CD8-positive, alpha-beta T cell (primary cell): ENCODE measurements at regions of chr9 and their contacts with region 1.

Region 1: GRCh38 chr9:93095205-93096130 is 549 bp upstream of the CARD19 start:
- DNase-seq: peak; percentile 100
- ATAC-seq: peak; percentile 83
- H3K4me3 ChIP-seq: peak overlapping the region; percentile 70 to 89
- H3K4me3 Mint-ChIP-seq: peak overlapping the region; percentile 85
- H3K27ac ChIP-seq: peak overlapping the region; percentile 90 to 98
- H3K27ac Mint-ChIP-seq: peak overlapping the region; percentile 97
- H3K4me1 ChIP-seq: peaks cover 65% of the 10 kb centered on the region
- H3K4me1 Mint-ChIP-seq: peaks cover 71% of the 10 kb centered on the region
- H3K27me3 ChIP-seq: no peaks in the 10 kb centered on the region
- H3K27me3 Mint-ChIP-seq: no peaks in the 10 kb centered on the region
- CTCF ChIP-seq: no peak

Region 2: GRCh38 chr9:92963831-92964626 is 131.4 kb before region 1 on chr9:
- CTCF ChIA-PET with region 1: no interaction called
- POLR2A ChIA-PET with region 1: interaction called, 9 read pairs
- intact Hi-C with region 1: loop called (anchors 2 to 5 kb)
- DNase-seq: peak; percentile 64 to 94 (median 82)
- ATAC-seq: peak; percentile 74
- H3K4me3 ChIP-seq: peak overlapping the region; percentile 59 to 81
- H3K4me3 Mint-ChIP-seq: peak overlapping the region; percentile 91
- H3K27ac ChIP-seq: peak overlapping the region; percentile 91 to 94
- H3K27ac Mint-ChIP-seq: peak overlapping the region; percentile 100
- H3K4me1 ChIP-seq: peaks cover 62% of the 10 kb centered on the region
- H3K4me1 Mint-ChIP-seq: peaks cover 60% of the 10 kb centered on the region
- H3K27me3 ChIP-seq: no peaks in the 10 kb centered on the region
- H3K27me3 Mint-ChIP-seq: no peaks in the 10 kb centered on the region
- CTCF ChIP-seq: no peak

Region 3: GRCh38 chr9:93020151-93020550 is 75.3 kb before region 1 on chr9:
- CTCF ChIA-PET with region 1: no interaction called
- POLR2A ChIA-PET with region 1: no interaction called
- intact Hi-C with region 1: no loop called
- DNase-seq: no peak
- ATAC-seq: no peak
- H3K4me3 ChIP-seq: no peak overlapping the region
- H3K4me3 Mint-ChIP-seq: no peak overlapping the region
- H3K27ac ChIP-seq: peak overlapping the region; percentile 19 to 75
- H3K27ac Mint-ChIP-seq: peak overlapping the region; percentile 97
- H3K4me1 ChIP-seq: peaks cover 47% of the 10 kb centered on the region
- H3K4me1 Mint-ChIP-seq: peaks cover 59% of the 10 kb centered on the region
- H3K27me3 ChIP-seq: no peaks in the 10 kb centered on the region
- H3K27me3 Mint-ChIP-seq: no peaks in the 10 kb centered on the region
- CTCF ChIP-seq: no peak

Region 4: DNA sequence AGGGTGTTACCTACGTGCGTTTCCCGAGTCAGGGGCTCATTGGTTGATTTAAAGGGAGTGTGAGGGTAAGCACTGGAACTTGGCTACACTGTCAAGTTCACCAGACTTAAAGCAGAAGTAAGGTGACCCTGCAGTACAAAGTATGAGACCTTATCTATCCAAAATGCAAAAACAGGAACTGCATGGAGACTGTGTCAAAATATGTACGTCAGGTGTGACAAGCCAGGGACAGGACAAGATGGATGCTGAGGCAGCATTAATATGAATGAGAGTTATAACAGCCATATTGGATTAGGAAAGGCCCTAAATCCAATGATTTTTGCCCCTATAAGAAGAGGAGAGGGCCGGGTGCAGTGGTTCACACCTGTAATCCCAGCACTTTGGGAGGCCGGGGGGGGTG is 52.3 kb before region 1 on chr9:
- CTCF ChIA-PET with region 1: no interaction called
- POLR2A ChIA-PET with region 1: no interaction called
- intact Hi-C with region 1: no loop called
- DNase-seq: no peak
- ATAC-seq: peak; percentile 54
- H3K4me3 ChIP-seq: no peak overlapping the region
- H3K4me3 Mint-ChIP-seq: no peak overlapping the region
- H3K27ac ChIP-seq: no peak overlapping the region
- H3K27ac Mint-ChIP-seq: peak overlapping the region; percentile 84
- H3K4me1 ChIP-seq: peaks cover 36% of the 10 kb centered on the region
- H3K4me1 Mint-ChIP-seq: peaks cover 53% of the 10 kb centered on the region
- H3K27me3 ChIP-seq: no peaks in the 10 kb centered on the region
- H3K27me3 Mint-ChIP-seq: no peaks in the 10 kb centered on the region
- CTCF ChIP-seq: no peak

Region 5: GRCh38 chr9:93064392-93065134 is 30.9 kb before region 1 on chr9:
- CTCF ChIA-PET with region 1: interaction called, 3 read pairs
- POLR2A ChIA-PET with region 1: interaction called, 19 read pairs
- intact Hi-C with region 1: loop called (anchors 1 kb)
- DNase-seq: peak; percentile 78 to 97 (median 89)
- ATAC-seq: peak; percentile 89
- H3K4me3 ChIP-seq: peak overlapping the region; percentile 24 to 91
- H3K4me3 Mint-ChIP-seq: peak overlapping the region; percentile 83
- H3K27ac ChIP-seq: peak overlapping the region; percentile 70 to 83
- H3K27ac Mint-ChIP-seq: peak overlapping the region; percentile 100
- H3K4me1 ChIP-seq: peaks cover 94% of the 10 kb centered on the region
- H3K4me1 Mint-ChIP-seq: peaks cover 88% of the 10 kb centered on the region
- H3K27me3 ChIP-seq: no peaks in the 10 kb centered on the region
- H3K27me3 Mint-ChIP-seq: no peaks in the 10 kb centered on the region
- CTCF ChIP-seq: no peak

Region 6: GRCh38 chr9:93453047-93453914 is 357.8 kb after region 1 on chr9 and contains the start of gene FAM120AOS:
- CTCF ChIA-PET with region 1: no interaction called
- POLR2A ChIA-PET with region 1: no interaction called
- intact Hi-C with region 1: loop called (anchors 1 to 5 kb)
- DNase-seq: peak; percentile 59 to 95 (median 85)
- ATAC-seq: peak; percentile 74
- H3K4me3 ChIP-seq: peak within 1 kb of the TSS; percentile 63 to 88
- H3K4me3 Mint-ChIP-seq: peak within 1 kb of the TSS; percentile 90
- H3K27ac ChIP-seq: peak within 1 kb of the TSS; percentile 49 to 68
- H3K27ac Mint-ChIP-seq: peak within 1 kb of the TSS; percentile 95
- H3K4me1 ChIP-seq: peaks cover 27% of the 10 kb centered on the region
- H3K4me1 Mint-ChIP-seq: peaks cover 60% of the 10 kb centered on the region
- H3K27me3 ChIP-seq: no peaks in the 10 kb centered on the region
- H3K27me3 Mint-ChIP-seq: no peaks in the 10 kb centered on the region
- CTCF ChIP-seq: no peak
- total RNA-seq, gene FAM120AOS: 40.3 to 40.7 TPM

Region 7: GRCh38 chr9:93488244-93488643 is 392.8 kb after region 1 on chr9:
- CTCF ChIA-PET with region 1: no interaction called
- POLR2A ChIA-PET with region 1: no interaction called
- intact Hi-C with region 1: no loop called
- DNase-seq: no peak
- ATAC-seq: no peak
- H3K4me3 ChIP-seq: no peak overlapping the region
- H3K4me3 Mint-ChIP-seq: no peak overlapping the region
- H3K27ac ChIP-seq: no peak overlapping the region
- H3K27ac Mint-ChIP-seq: no peak overlapping the region
- H3K4me1 ChIP-seq: no peaks in the 10 kb centered on the region
- H3K4me1 Mint-ChIP-seq: peaks cover 43% of the 10 kb centered on the region
- H3K27me3 ChIP-seq: no peaks in the 10 kb centered on the region
- H3K27me3 Mint-ChIP-seq: no peaks in the 10 kb centered on the region
- CTCF ChIP-seq: no peak

Region 8: GRCh38 chr9:94178927-94179326 is 1083.5 kb after region 1 on chr9:
- CTCF ChIA-PET with region 1: no interaction called
- POLR2A ChIA-PET with region 1: no interaction called
- intact Hi-C with region 1: loop called in 1 of 2 experiments (anchors 10 kb)
- DNase-seq: no peak
- ATAC-seq: no peak
- H3K4me3 ChIP-seq: no peak overlapping the region
- H3K4me3 Mint-ChIP-seq: no peak overlapping the region
- H3K27ac ChIP-seq: no peak overlapping the region
- H3K27ac Mint-ChIP-seq: peak overlapping the region; percentile 52
- H3K4me1 ChIP-seq: peaks cover 22% of the 10 kb centered on the region
- H3K4me1 Mint-ChIP-seq: peaks cover 64% of the 10 kb centered on the region
- H3K27me3 ChIP-seq: no peaks in the 10 kb centered on the region
- H3K27me3 Mint-ChIP-seq: no peaks in the 10 kb centered on the region
- CTCF ChIP-seq: no peak